ENCODE measurements at regions of chr1 and their contacts with region 1.

Region 1: DNA sequence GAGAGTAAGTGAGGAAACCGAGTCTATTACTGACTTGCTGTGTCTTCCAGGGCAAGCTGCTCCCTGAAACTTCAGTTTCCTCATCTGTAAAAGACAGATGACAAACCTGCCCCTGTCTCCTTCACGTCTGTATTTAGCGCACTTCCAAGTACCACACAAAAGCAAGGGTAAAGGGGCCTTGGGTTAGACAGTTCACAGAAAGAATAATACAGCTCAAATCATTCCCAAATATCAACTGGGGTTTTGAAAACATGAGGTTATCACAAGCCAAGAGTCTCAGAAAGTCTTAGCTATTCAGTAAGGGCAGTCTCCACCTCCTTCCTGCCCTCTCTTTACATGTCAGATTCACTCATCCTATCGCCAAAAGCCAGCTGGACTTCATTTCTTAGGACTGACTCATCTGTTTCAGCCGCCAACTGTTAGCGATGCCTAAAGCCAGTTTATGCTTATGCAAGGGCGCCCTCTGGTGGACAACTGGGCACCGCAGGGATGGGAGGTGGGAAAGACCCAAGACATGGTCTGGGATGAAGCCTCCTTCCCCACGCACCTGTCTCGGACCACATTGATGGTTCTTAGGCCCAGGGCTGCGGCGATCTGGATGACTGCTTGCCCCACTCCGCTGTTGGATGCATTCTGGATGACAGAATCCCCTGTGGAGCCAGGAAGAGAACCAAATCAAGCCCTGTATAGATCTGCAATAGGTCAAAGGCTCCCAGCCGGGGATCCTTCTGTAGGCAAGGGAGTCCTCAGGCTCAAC is 21.1 kb upstream of the SRSF4 start:
- DNase-seq: peak; percentile 99
- ATAC-seq: peak; percentile 93
- H3K4me3 ChIP-seq: no peak overlapping the region
- H3K27ac ChIP-seq: peak overlapping the region; percentile 85
- H3K4me1 ChIP-seq: peaks cover 16% of the 10 kb centered on the region
- H3K27me3 ChIP-seq: no peaks in the 10 kb centered on the region
- CTCF ChIP-seq: peak; percentile 98
- POLR2A ChIP-seq: peak; percentile 52; the same call in 1 of the 2 replicates
- RAD21 ChIP-seq: peak; percentile 99

Region 2: GRCh38 chr1:28779751-28780408 is 422.9 kb before region 1 on chr1:
- CTCF ChIA-PET with region 1: no interaction called
- POLR2A ChIA-PET with region 1: no interaction called
- dilution Hi-C with region 1: no loop called
- in situ Hi-C with region 1: loop called (anchors 10 kb)
- intact Hi-C with region 1: loop called (anchors 2 kb)
- DNase-seq: no peak
- ATAC-seq: no peak
- H3K4me3 ChIP-seq: no peak overlapping the region
- H3K27ac ChIP-seq: no peak overlapping the region
- H3K4me1 ChIP-seq: peaks cover 2% of the 10 kb centered on the region; the same call in 1 of the 2 replicates
- H3K27me3 ChIP-seq: no peaks in the 10 kb centered on the region
- CTCF ChIP-seq: no peak
- POLR2A ChIP-seq: no peak
- RAD21 ChIP-seq: no peak

Region 3: DNA sequence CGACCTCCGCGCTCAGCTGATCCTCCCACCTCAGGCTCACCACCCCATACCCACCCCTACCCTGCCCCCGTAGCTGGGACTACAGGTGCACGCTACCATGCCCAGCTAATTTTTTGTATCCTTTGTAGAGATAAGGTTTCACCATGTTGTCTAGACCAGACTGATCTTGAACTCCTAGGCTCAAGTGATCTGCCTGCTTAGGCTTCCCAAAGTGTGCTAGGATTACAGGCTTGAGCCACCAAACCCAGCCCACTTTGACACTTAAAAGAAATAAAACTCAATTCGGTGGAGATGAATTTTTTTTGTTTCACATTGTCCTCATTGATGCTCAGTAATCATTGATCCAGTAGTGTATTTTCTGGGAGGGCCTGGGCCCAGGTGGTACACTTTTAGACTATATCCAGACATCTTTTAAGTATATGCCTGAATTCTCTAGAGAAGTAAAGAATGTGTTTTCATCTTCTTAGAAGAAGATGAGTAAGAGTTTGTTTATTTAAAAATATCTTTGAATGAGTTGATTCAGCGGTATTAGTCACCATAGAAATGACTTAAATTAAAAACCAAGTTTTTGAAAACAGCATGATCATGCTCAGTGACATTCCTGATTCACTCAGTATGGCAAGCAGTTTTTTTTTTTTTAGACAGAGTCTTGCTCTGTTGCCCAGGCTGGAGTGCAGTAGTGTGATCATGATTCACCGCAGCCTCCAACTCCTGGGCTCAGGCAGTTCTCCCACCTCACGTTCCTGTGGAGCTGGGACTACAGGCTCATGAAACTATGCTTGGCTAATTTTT is 230.6 kb before region 1 on chr1:
- CTCF ChIA-PET with region 1: no interaction called
- POLR2A ChIA-PET with region 1: no interaction called
- dilution Hi-C with region 1: no loop called
- in situ Hi-C with region 1: no loop called
- intact Hi-C with region 1: loop called (anchors 5 kb)
- DNase-seq: peak; percentile 96
- ATAC-seq: peak; percentile 91
- H3K4me3 ChIP-seq: no peak overlapping the region
- H3K27ac ChIP-seq: peak overlapping the region; percentile 61
- H3K4me1 ChIP-seq: peaks cover 4% of the 10 kb centered on the region
- H3K27me3 ChIP-seq: no peaks in the 10 kb centered on the region
- CTCF ChIP-seq: no peak
- POLR2A ChIP-seq: no peak
- RAD21 ChIP-seq: no peak

Measured in IMR-90 (cell line).